Pancreas (tissue), 10 donors: ENCODE measurements at regions of chr9 and their contacts with region 1.

Region 1: GRCh38 chr9:135343837-135344522 is 135.6 kb upstream of the PPP1R26 start:
- DNase-seq: peak; percentile 51 to 95 (median 82)
- ATAC-seq: peak; percentile 90 to 97 (median 91)
- H3K4me3 ChIP-seq: no peak overlapping the region
- H3K27ac ChIP-seq: no peak overlapping the region
- H3K4me1 ChIP-seq: no peaks in the 10 kb centered on the region
- H3K27me3 ChIP-seq: no peaks in the 10 kb centered on the region
- CTCF ChIP-seq: peak; percentile 89 to 96 (median 93)

Region 2: GRCh38 chr9:135085830-135086546 is 258.0 kb before region 1 on chr9:
- intact Hi-C with region 1: loop called in 2 of 3 experiments (anchors 5 kb)
- DNase-seq: peak; percentile 83 to 95 (median 90)
- ATAC-seq: peak; percentile 85 to 93 (median 88)
- H3K4me3 ChIP-seq: peak overlapping the region in 2 of 4 donors; percentile 10 to 28
- H3K27ac ChIP-seq: peak overlapping the region in 2 of 4 donors; percentile 10 to 39
- H3K4me1 ChIP-seq: peaks cover 18 to 31% (median 26%) of the 10 kb centered on the region in 3 donors
- H3K27me3 ChIP-seq: no peaks in the 10 kb centered on the region
- CTCF ChIP-seq: peak; percentile 94 to 98 (median 94)